Activated CD4-positive, alpha-beta memory T cell treated with anti-CD3 and anti-CD28 coated beads for 36 hours (primary cell): ENCODE measurements at regions of chr14 and their contacts with region 1.

Region 1: GRCh38 chr14:106665814-106666213 is 1139.4 kb downstream of the TMEM121 start:
- DNase-seq: no peak
- H3K4me3 Mint-ChIP-seq: no peak overlapping the region
- H3K27ac Mint-ChIP-seq: no peak overlapping the region
- H3K4me1 Mint-ChIP-seq: peaks cover 22% of the 10 kb centered on the region
- H3K27me3 Mint-ChIP-seq: peaks cover 11% of the 10 kb centered on the region

Region 2: GRCh38 chr14:106372870-106373652 is 292.8 kb before region 1 on chr14:
- CTCF ChIA-PET with region 1: no interaction called
- POLR2A ChIA-PET with region 1: no interaction called
- intact Hi-C with region 1: no loop called
- DNase-seq: peak; percentile 90
- H3K4me3 Mint-ChIP-seq: peak overlapping the region; percentile 56
- H3K27ac Mint-ChIP-seq: peak overlapping the region; percentile 21
- H3K4me1 Mint-ChIP-seq: peaks cover 21% of the 10 kb centered on the region
- H3K27me3 Mint-ChIP-seq: peaks cover 12% of the 10 kb centered on the region

Region 3: GRCh38 chr14:106605548-106606448 is 60.0 kb before region 1 on chr14:
- CTCF ChIA-PET with region 1: interaction called, 15 read pairs
- POLR2A ChIA-PET with region 1: no interaction called
- intact Hi-C with region 1: no loop called
- DNase-seq: peak; percentile 89
- H3K4me3 Mint-ChIP-seq: no peak overlapping the region
- H3K27ac Mint-ChIP-seq: no peak overlapping the region
- H3K4me1 Mint-ChIP-seq: peaks cover 4% of the 10 kb centered on the region
- H3K27me3 Mint-ChIP-seq: peaks cover 52% of the 10 kb centered on the region

Region 4: DNA sequence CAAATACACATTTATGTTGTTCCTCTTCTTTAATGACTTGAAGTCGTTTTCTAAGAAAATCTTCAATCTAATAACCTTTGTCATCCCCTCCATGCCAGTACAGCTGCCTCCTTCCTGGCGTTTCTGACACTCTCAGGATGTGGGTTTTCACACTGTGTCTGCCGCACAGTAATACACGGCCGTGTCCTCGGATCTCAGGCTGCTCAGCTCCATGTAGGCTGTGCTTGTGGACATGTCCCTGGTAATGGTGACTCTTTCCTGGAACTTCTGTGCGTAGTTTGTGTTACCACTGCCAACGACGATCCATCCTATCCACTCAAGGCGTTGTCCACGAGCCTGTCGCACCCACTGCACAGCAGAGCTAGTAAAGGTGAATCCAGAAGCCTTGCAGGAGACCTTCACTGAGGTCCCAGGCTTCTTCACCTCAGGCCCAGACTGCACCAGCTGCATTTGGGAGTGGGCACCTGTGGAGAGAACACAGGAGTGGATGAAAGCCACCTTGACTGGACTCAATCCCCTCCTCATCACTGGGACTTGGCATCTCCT is 43.5 kb before region 1 on chr14:
- CTCF ChIA-PET with region 1: interaction called, 51 read pairs
- POLR2A ChIA-PET with region 1: no interaction called
- intact Hi-C with region 1: no loop called
- DNase-seq: peak; percentile 49
- H3K4me3 Mint-ChIP-seq: no peak overlapping the region
- H3K27ac Mint-ChIP-seq: no peak overlapping the region
- H3K4me1 Mint-ChIP-seq: peaks cover 10% of the 10 kb centered on the region
- H3K27me3 Mint-ChIP-seq: peaks cover 16% of the 10 kb centered on the region

Region 5: DNA sequence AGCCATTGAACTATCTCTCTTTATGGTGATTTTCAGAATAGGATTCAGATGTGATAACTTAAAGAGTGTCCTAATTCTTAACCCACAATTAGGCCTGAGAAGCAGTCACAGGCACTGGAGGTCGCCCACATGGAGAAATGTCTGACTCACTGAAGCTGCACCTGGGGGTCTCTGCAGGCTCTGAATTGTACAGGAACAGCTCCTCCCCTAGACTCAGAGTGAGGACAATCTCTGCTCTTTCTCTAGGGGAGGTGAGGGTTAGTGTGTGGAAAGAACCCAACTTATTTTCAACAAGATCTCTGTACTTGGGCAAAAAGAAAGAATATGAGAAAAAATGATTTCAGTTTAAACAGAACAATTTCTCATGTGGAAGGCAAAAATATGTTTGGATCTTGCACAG is 14.8 kb before region 1 on chr14:
- CTCF ChIA-PET with region 1: interaction called, 11 read pairs
- POLR2A ChIA-PET with region 1: no interaction called
- intact Hi-C with region 1: no loop called
- DNase-seq: no peak
- H3K4me3 Mint-ChIP-seq: no peak overlapping the region
- H3K27ac Mint-ChIP-seq: no peak overlapping the region
- H3K4me1 Mint-ChIP-seq: no peaks in the 10 kb centered on the region
- H3K27me3 Mint-ChIP-seq: peaks cover 11% of the 10 kb centered on the region

Region 6: GRCh38 chr14:106681568-106681967 is 15.8 kb after region 1 on chr14:
- CTCF ChIA-PET with region 1: interaction called, 57 read pairs
- POLR2A ChIA-PET with region 1: no interaction called
- intact Hi-C with region 1: no loop called
- DNase-seq: no peak
- H3K4me3 Mint-ChIP-seq: no peak overlapping the region
- H3K27ac Mint-ChIP-seq: no peak overlapping the region
- H3K4me1 Mint-ChIP-seq: no peaks in the 10 kb centered on the region
- H3K27me3 Mint-ChIP-seq: peaks cover 19% of the 10 kb centered on the region

Region 7: GRCh38 chr14:106691601-106692291 is 25.9 kb after region 1 on chr14:
- CTCF ChIA-PET with region 1: interaction called, 20 read pairs
- POLR2A ChIA-PET with region 1: no interaction called
- intact Hi-C with region 1: no loop called
- DNase-seq: peak; percentile 93
- H3K4me3 Mint-ChIP-seq: no peak overlapping the region
- H3K27ac Mint-ChIP-seq: no peak overlapping the region
- H3K4me1 Mint-ChIP-seq: peaks cover 11% of the 10 kb centered on the region
- H3K27me3 Mint-ChIP-seq: peaks cover 3% of the 10 kb centered on the region

Region 8: DNA sequence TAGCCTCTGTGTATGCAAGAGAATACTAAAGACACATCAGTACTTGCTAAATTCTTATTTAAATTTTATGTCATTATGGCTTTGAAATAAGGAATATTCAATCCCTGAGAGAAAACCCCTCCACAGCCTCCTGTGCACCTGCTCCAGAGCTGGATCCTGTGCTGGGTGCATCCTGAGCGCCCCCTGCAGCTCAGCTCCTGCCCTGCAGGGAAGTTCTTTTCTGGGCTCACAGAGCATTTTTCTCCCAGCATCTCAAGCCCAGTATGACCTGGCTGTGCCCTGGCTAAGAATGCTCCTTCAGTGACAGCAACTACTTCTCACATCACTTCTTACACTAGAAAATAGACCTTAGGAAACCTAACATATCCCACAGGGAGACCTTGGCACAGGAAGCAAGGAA is 72.3 kb after region 1 on chr14:
- CTCF ChIA-PET with region 1: interaction called, 18 read pairs
- POLR2A ChIA-PET with region 1: no interaction called
- intact Hi-C with region 1: no loop called
- DNase-seq: peak; percentile 43
- H3K4me3 Mint-ChIP-seq: no peak overlapping the region
- H3K27ac Mint-ChIP-seq: no peak overlapping the region
- H3K4me1 Mint-ChIP-seq: peaks cover 8% of the 10 kb centered on the region
- H3K27me3 Mint-ChIP-seq: no peaks in the 10 kb centered on the region

Region 9: GRCh38 chr14:106808458-106808857 is 142.6 kb after region 1 on chr14:
- CTCF ChIA-PET with region 1: no interaction called
- POLR2A ChIA-PET with region 1: no interaction called
- intact Hi-C with region 1: no loop called
- DNase-seq: no peak
- H3K4me3 Mint-ChIP-seq: no peak overlapping the region
- H3K27ac Mint-ChIP-seq: no peak overlapping the region
- H3K4me1 Mint-ChIP-seq: peaks cover 10% of the 10 kb centered on the region
- H3K27me3 Mint-ChIP-seq: peaks cover 11% of the 10 kb centered on the region